Left ventricle myocardium inferior (tissue), 1 donor: ENCODE measurements at regions of chr17 and their contacts with region 1.

Region 1: GRCh38 chr17:49707608-49708514 is at the start of gene SLC35B1:
- DNase-seq: peak; percentile 100
- H3K4me3 ChIP-seq: peak within 1 kb of the TSS; percentile 99
- H3K27ac ChIP-seq: peak within 1 kb of the TSS; percentile 94
- H3K4me1 ChIP-seq: peaks cover 47% of the 10 kb centered on the region
- H3K27me3 ChIP-seq: no peaks in the 10 kb centered on the region
- CTCF ChIP-seq: peak; percentile 79
- total RNA-seq, gene SLC35B1: 53.4 TPM

Region 2: DNA sequence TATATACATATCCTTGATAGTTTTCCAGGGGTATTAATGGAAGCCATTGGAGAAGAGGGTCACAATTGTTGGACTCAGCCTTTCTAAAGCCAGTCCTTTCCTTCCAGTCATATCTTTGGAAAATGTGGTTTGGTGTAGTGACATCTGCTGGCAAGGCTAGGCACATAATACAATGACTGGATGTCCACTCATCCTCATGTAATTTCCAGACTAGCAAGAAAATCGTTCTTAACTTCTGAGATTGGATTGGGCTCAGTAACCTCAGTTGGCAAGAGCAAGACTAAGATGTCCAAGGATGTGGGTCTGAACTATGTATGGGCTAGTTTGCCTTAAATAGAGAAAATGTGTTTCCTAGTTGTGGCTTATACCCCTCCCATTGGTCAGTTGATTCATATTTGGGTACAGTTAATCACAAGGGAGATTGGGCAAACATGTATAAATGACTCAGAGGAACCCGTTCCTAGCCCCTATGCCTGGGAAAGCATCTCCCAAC is 71.9 kb after region 1 on chr17:
- intact Hi-C with region 1: loop called (anchors 5 kb)
- DNase-seq: no peak
- H3K4me3 ChIP-seq: no peak overlapping the region
- H3K27ac ChIP-seq: peak overlapping the region; percentile 21
- H3K4me1 ChIP-seq: peaks cover 62% of the 10 kb centered on the region
- H3K27me3 ChIP-seq: no peaks in the 10 kb centered on the region
- CTCF ChIP-seq: peak; percentile 69

Region 3: DNA sequence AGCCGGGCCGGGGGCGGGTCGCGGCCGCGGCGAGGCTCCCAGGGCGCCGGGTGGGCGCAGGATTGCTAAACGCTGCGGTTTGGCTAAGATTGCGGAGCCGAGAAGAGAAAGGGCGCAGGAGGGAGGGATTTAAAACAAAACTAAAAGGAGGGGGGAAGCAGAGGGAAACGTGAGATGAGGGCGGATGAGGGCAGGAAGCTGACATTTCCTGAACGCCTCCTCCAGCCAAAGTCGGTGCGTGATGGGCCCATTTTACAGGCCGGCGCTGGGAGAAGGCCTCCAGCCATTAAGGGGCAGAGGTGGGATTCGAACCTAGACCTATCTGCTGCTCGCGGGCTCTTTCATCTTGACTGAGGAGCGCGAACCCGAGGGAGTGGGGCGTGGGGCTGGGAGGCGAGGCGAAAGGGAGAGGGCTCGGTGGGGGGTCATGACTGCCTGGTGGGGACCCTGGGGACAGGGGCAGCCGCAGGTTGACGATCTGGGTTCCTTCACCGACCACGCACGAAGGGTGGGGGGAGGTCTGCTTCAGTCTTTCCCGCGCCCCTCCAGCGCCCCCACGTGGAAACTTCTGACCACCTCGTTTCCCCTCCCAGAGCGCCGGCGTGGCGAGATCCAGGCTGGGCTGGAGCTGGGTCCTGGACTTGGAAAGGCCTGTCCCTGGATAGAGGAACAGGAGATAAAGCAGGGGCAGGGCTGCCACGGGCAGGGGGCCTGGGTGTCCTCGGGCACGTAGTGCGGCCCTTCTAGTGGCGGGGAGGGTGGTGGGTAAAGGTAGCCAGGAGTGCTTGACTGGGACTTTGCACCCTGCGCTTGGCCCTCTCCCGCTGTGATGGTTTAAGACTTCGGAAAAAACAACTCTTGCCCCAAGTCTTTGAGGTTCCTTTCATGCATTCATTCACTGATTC is 143.8 kb after region 1 on chr17:
- intact Hi-C with region 1: loop called (anchors 10 kb)
- DNase-seq: peak; percentile 81
- H3K4me3 ChIP-seq: peak overlapping the region; percentile 71
- H3K27ac ChIP-seq: peak overlapping the region; percentile 57
- H3K4me1 ChIP-seq: peaks cover 29% of the 10 kb centered on the region
- H3K27me3 ChIP-seq: peaks cover 3% of the 10 kb centered on the region
- CTCF ChIP-seq: peak; percentile 85